Natural killer cell (primary cell): ENCODE measurements at regions of chr2 and their contacts with region 1.

Region 1: GRCh38 chr2:64330281-64331113 is 123.5 kb upstream of the LGALSL start:
- DNase-seq: peak; percentile 65 to 93
- ATAC-seq: peak; percentile 10 to 50 (median 36)
- H3K4me3 ChIP-seq: no peak overlapping the region
- H3K4me3 Mint-ChIP-seq: peak overlapping the region; percentile 70
- H3K27ac ChIP-seq: no peak overlapping the region
- H3K27ac Mint-ChIP-seq: peak overlapping the region in 1 of 2 donors; percentile 54
- H3K4me1 ChIP-seq: peaks cover 36% of the 10 kb centered on the region
- H3K4me1 Mint-ChIP-seq: peaks cover 36 to 38% of the 10 kb centered on the region in 2 donors
- H3K27me3 ChIP-seq: no peaks in the 10 kb centered on the region
- H3K27me3 Mint-ChIP-seq: peaks cover 0 to 2% of the 10 kb centered on the region in 2 donors
- CTCF ChIP-seq: peak; percentile 89

Region 2: DNA sequence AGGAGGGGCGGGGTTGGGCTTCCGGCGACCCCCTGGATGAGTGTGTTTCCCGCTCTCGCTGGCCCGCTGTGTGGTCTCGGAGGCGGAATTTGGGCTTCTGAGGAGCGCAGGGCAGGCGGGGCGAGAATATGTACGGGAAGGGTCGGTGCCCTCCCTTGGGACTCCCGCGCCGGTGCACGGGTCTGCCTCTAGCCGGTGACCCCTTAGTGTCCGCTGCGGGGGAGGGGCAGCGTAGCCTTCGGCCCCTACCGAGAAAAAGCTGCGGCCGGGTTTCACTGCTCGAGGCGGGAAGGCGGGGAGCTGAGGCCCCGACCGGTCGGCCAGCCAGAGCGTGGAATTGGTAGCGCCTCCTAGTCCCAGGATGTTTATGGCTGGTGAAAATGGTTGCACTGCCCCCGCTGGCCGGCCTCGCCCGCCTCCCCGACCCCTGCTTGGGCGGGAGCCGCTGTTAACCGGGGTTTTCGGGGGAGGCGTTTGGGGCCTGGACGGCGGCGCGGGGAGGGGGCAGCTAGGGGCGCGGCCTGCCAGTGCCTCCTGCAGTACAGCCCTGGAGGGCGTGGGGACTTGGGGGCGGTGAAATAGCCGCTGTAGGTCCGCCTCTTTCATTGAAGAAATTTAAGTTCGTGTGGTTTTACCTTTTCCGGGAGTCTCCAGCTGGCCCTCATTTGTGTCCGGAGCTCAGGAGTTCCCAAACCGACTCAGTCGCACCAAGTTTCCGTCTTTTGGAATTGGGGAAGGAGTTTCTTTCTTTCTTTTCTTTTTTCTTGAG is 489.1 kb before region 1 on chr2 and contains the start of gene UGP2:
- intact Hi-C with region 1: loop called (anchors 10 kb)
- DNase-seq: peak; percentile 85 to 89
- ATAC-seq: peak; percentile 74 to 85 (median 74)
- H3K4me3 ChIP-seq: peak within 1 kb of the TSS; percentile 77
- H3K4me3 Mint-ChIP-seq: peak within 1 kb of the TSS; percentile 97
- H3K27ac ChIP-seq: peak within 1 kb of the TSS; percentile 89
- H3K27ac Mint-ChIP-seq: peak within 1 kb of the TSS; percentile 90 to 97
- H3K4me1 ChIP-seq: peaks cover 12% of the 10 kb centered on the region
- H3K4me1 Mint-ChIP-seq: peaks cover 45 to 59% of the 10 kb centered on the region in 2 donors
- H3K27me3 ChIP-seq: no peaks in the 10 kb centered on the region
- H3K27me3 Mint-ChIP-seq: no peaks in the 10 kb centered on the region
- CTCF ChIP-seq: no peak
- total RNA-seq, gene UGP2: 100 to 117 (median 101) TPM

Region 3: DNA sequence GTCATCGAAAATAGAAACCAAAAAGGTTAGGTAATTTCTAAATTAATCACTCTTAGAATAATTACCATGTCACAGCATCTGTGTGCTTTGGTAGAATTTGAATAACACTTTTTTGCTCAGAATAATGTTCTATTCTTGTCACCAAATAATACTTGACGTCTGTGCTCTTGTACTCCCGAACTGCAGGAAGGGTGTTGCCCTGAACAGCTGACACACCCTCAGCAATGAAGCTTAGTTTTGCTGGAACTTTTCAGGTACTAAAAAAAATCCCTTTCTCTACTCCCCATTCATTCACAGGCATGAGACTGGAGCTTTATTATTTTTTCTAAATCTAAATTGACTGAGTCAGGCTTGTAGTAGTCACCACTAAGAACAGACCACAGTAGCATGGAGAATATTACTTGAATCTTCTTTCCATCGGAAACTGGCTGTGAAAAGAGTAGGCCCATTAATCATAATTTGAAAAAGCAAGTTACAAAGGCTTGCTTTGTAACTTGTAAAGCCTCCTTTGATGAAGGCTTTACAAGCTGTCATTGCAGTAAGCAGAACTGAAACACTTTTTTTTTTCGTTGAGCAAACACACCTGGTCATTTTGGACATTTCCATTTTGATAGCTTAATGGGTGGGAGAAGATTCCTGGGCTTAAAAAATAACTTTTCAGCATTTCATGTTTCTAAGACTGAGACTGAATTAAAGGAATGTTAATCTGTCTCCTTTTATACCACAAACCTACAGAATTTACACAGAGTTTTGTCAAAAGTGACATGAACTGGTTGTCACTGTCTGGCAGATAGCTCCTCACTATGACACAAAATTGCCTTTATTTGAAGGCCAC is 116.0 kb before region 1 on chr2:
- intact Hi-C with region 1: loop called (anchors 10 kb)
- DNase-seq: peak in 1 of 2 donors; percentile 64
- ATAC-seq: peak in 2 of 3 donors; percentile 10 to 18
- H3K4me3 ChIP-seq: no peak overlapping the region
- H3K4me3 Mint-ChIP-seq: no peak overlapping the region
- H3K27ac ChIP-seq: peak overlapping the region; percentile 78
- H3K27ac Mint-ChIP-seq: no peak overlapping the region
- H3K4me1 ChIP-seq: peaks cover 8% of the 10 kb centered on the region
- H3K4me1 Mint-ChIP-seq: peaks cover 10% of the 10 kb centered on the region in 2 donors
- H3K27me3 ChIP-seq: no peaks in the 10 kb centered on the region
- H3K27me3 Mint-ChIP-seq: no peaks in the 10 kb centered on the region
- CTCF ChIP-seq: no peak

Region 4: GRCh38 chr2:64342195-64343099 is 11.9 kb after region 1 on chr2:
- intact Hi-C with region 1: no loop called
- DNase-seq: no peak
- ATAC-seq: no peak
- H3K4me3 ChIP-seq: no peak overlapping the region
- H3K4me3 Mint-ChIP-seq: no peak overlapping the region
- H3K27ac ChIP-seq: no peak overlapping the region
- H3K27ac Mint-ChIP-seq: no peak overlapping the region
- H3K4me1 ChIP-seq: no peaks in the 10 kb centered on the region
- H3K4me1 Mint-ChIP-seq: no peaks in the 10 kb centered on the region
- H3K27me3 ChIP-seq: no peaks in the 10 kb centered on the region
- H3K27me3 Mint-ChIP-seq: peaks cover 5 to 15% of the 10 kb centered on the region in 2 donors
- CTCF ChIP-seq: no peak

Region 5: DNA sequence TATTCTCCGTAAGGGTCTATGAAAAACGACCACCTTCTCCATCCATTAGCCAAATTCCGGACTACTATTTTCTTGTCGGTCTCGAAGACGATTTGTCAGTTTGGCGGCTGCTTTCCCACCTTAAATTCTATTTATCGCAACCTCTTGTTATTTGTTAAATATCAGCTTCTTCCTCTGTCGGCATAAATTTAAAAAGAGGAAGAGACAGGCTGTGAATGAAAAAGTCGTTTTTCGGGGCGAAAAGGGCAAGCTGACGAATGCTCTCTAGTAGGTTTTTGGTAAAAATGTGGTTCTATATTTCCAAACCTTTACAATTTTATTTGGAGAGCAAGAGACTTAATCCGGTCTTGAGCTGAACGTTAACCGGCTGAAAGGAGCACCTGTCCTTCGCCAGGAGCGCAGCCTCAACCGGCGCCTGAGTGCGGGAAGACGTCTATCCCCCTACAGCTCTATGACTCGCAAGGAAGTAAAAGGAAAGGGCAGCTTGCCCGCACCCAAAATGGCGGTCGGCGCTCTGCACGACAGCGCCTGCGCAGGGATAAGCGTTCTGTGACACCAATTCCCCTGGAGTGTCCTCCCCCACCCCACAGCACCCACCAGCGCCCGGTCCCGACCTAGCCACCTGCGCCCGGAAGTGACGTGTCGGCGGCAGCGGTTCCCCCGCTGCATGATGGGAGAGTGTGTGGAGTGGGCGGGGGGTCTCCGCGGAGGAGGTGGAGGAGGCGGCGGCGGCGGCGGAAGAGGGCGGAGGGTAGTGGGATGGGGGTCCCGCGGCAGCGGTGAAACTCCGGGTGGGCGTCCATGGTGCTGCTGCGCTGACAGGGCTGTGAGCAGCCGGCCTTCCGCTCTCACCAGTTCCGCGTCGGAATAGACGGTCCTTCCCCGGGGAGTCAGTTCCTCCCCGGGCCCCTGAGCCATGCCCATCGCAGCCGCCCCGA is 193.4 kb after region 1 on chr2 and contains the start of gene AFTPH:
- intact Hi-C with region 1: loop called (anchors 1 kb)
- DNase-seq: peak; percentile 98 to 100
- ATAC-seq: peak; percentile 90 to 99 (median 95)
- H3K4me3 ChIP-seq: peak within 1 kb of the TSS; percentile 74
- H3K4me3 Mint-ChIP-seq: peak within 1 kb of the TSS; percentile 98
- H3K27ac ChIP-seq: peak within 1 kb of the TSS; percentile 86
- H3K27ac Mint-ChIP-seq: peak within 1 kb of the TSS; percentile 96 to 98
- H3K4me1 ChIP-seq: peaks cover 11% of the 10 kb centered on the region
- H3K4me1 Mint-ChIP-seq: peaks cover 28 to 42% of the 10 kb centered on the region in 2 donors
- H3K27me3 ChIP-seq: no peaks in the 10 kb centered on the region
- H3K27me3 Mint-ChIP-seq: no peaks in the 10 kb centered on the region
- CTCF ChIP-seq: no peak
- total RNA-seq, gene AFTPH: 28.9 to 39.6 (median 39.5) TPM

Region 6: GRCh38 chr2:64865073-64865830 is 534.8 kb after region 1 on chr2:
- intact Hi-C with region 1: loop called (anchors 2 kb)
- DNase-seq: peak; percentile 64 to 83
- ATAC-seq: peak; percentile 84 to 88 (median 88)
- H3K4me3 ChIP-seq: peak overlapping the region; percentile 53
- H3K4me3 Mint-ChIP-seq: no peak overlapping the region
- H3K27ac ChIP-seq: peak overlapping the region; percentile 50
- H3K27ac Mint-ChIP-seq: no peak overlapping the region
- H3K4me1 ChIP-seq: peaks cover 38% of the 10 kb centered on the region
- H3K4me1 Mint-ChIP-seq: no peaks in the 10 kb centered on the region
- H3K27me3 ChIP-seq: peaks cover 3% of the 10 kb centered on the region
- H3K27me3 Mint-ChIP-seq: peaks cover 4 to 9% of the 10 kb centered on the region in 2 donors
- CTCF ChIP-seq: peak; percentile 94